ENCODE measurements at regions of chr15 and their contacts with region 1.

Region 1: GRCh38 chr15:92077353-92078085 is 224.0 kb downstream of the SLCO3A1 start:
- DNase-seq: peak; percentile 56 to 90 (median 78)

Region 2: GRCh38 chr15:91302588-91303439 is 774.7 kb before region 1 on chr15:
- intact Hi-C with region 1: loop called (anchors 5 kb)
- DNase-seq: peak in 41 of 42 donors; percentile 6 to 79 (median 45)

Region 3: GRCh38 chr15:91942676-91943576 is 134.6 kb before region 1 on chr15:
- intact Hi-C with region 1: loop called (anchors 10 kb)
- DNase-seq: peak in 25 of 42 donors; percentile 23 to 78 (median 49)

Region 4: GRCh38 chr15:91970142-91970541 is 107.4 kb before region 1 on chr15:
- intact Hi-C with region 1: loop called (anchors 10 kb)
- DNase-seq: peak; percentile 25 to 89 (median 72)

Region 5: DNA sequence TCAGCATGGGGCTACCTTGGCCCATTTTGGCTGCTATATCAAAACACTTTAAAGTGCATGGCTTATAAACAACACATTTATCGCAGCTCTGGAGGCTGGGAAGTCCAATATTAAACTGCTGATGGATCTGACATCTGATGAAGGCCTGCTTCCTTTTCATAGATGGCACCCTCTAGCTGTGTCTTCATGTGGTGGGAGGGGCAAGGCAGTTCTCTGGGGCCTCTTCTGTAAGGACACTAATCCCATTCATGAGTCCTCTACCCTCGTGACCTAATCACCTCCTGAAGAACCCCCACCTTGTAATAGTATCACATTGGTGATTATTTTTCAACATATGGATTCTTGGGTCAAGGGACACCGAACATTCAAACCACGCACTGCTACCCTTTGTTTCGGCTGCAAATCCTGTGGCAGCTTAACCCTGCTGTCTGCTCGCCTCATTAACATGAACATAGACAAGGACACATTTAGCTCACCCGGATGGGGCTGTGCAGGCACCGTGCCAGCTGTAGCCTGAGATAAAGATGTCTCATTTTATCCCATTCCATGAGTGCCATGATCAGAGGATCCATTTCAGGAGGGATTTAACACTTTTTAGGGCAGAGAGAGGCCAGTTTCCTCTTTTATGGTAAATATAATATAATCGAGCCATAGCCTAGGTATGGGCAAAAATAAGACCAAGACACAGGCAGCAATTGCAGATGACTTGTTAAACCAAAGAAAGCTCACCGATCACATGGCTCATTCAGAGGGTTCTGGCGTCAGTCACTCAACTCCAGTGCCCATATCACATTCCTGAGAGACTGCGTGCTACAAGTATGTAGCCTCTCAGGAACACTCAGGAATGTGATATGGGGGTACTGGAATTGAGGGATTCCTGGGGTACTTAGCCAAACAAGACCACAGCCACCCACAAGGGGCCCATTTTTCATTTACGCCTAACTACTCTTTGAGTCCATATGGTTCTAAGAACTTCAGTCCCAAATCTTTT is 65.0 kb after region 1 on chr15:
- intact Hi-C with region 1: no loop called
- DNase-seq: peak in 4 of 42 donors; percentile 26 to 49 (median 36)